Natural killer cell (primary cell): ENCODE measurements at regions of chr10 and their contacts with region 1.

Region 1: DNA sequence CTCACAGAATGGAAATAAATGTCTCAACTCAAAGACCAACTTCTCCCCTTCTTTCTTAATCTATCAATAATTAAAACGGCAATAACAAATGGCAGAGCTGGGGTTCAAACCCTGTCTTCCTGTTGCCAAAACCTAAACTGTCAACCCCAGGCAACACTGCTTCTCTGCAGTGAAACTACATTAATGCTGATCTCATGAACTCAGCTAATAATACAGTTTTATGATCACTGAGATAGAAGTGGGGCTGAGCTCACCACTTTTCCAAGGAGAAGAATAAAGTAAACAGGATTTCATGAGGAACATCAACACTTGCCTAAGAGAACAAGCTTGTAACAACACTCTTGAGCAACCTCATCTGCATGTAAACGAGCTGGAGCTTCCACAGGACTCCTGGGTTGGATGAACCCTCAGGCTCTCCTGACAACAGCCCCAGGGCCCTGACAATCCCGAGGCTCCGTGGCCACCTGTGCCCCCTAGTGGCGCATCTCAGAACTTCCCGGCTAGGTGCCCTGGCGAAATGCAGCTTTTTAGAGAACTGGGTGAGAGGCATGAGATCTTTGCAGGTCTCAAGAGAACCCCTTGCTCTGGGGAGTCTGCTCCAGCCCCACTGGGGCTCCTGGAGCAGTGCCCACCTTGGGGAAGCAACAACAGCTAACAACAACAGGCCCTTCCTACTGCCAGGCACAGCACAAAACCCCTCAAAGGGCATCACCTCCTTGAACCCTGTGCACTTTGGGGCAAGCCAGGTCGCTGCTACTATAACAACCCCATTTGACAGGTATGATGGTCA is 169.3 kb downstream of the SH3PXD2A start:
- DNase-seq: peak; percentile 64 to 87
- ATAC-seq: peak; percentile 77 to 92 (median 91)
- H3K4me3 ChIP-seq: no peak overlapping the region
- H3K4me3 Mint-ChIP-seq: no peak overlapping the region
- H3K27ac ChIP-seq: no peak overlapping the region
- H3K27ac Mint-ChIP-seq: no peak overlapping the region
- H3K4me1 ChIP-seq: no peaks in the 10 kb centered on the region
- H3K4me1 Mint-ChIP-seq: no peaks in the 10 kb centered on the region
- H3K27me3 ChIP-seq: no peaks in the 10 kb centered on the region
- H3K27me3 Mint-ChIP-seq: peaks cover 0 to 7% of the 10 kb centered on the region in 2 donors
- CTCF ChIP-seq: peak; percentile 95

Region 2: DNA sequence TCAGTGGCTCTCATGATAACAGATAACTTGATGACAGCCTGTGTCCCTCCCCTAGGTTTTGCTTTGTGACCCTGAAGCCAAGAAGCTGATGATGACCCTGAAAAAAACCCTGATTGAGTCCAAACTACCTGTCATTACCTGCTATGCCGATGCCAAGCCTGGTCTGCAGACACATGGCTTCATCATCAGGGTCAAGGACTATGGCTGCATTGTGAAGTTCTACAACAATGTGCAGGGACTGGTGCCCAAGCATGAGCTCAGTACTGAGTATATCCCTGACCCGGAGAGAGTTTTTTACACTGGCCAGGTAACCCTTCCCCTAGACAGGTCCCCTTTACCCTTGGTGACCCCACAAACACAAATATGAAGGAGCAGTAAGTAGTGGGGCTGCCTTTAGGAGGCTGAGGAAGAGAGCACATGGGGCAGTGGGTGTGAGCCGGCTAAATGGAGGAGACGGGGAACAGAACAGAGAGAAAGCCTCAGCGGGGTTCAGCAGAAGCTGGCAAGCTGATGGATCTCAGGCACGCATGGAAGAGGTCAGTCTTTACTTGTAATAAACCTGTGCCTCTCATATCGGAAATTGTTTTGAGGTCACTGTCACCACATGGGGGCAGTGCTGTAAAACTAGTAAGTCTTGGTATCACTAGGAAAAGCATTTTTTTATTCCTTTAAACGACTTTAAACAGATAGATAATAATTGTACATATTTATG is 269.5 kb before region 1 on chr10:
- intact Hi-C with region 1: loop called (anchors 5 kb)
- DNase-seq: peak; percentile 50 to 84
- ATAC-seq: peak; percentile 55 to 70 (median 65)
- H3K4me3 ChIP-seq: no peak overlapping the region
- H3K4me3 Mint-ChIP-seq: no peak overlapping the region
- H3K27ac ChIP-seq: no peak overlapping the region
- H3K27ac Mint-ChIP-seq: no peak overlapping the region
- H3K4me1 ChIP-seq: no peaks in the 10 kb centered on the region
- H3K4me1 Mint-ChIP-seq: no peaks in the 10 kb centered on the region
- H3K27me3 ChIP-seq: no peaks in the 10 kb centered on the region
- H3K27me3 Mint-ChIP-seq: no peaks in the 10 kb centered on the region
- CTCF ChIP-seq: peak; percentile 78

Region 3: DNA sequence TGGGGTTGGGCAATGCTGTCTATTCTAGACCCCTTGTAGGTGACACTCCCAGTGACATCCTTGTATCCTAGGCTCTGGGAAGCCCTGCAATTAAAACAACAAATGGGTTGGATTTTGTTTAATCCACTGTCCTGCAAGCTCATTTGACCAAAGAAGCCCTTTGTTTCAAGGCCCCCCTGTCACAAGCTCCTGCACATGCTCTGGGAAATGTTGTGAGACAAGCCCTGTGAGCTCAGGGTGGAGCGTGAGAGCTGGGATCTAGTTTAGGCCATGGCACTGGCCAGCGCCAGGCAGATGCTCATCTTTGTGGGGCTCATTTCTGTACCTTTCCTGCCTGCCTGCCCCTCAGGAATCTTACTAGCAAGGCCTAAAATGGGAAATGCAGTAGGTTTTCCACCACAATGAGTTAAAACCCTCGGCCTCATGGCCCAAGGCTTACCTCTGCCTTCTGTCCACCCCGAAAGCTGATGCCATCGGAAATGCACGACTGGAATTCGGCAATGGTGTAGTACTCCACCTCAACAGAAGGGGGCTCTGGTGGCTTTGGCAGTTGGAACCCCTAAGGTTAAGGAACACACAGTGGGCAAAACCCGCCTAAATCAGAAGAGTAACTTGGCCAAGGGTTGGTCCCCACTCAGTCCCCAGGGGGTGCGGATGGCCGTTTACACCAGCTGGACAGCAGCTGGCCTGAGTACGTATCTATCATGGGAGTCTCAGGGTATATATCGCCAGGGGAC is 80.5 kb before region 1 on chr10:
- intact Hi-C with region 1: loop called (anchors 1 kb)
- DNase-seq: peak in 1 of 2 donors; percentile 70
- ATAC-seq: peak; percentile 21 to 64 (median 46)
- H3K4me3 ChIP-seq: no peak overlapping the region
- H3K4me3 Mint-ChIP-seq: no peak overlapping the region
- H3K27ac ChIP-seq: no peak overlapping the region
- H3K27ac Mint-ChIP-seq: no peak overlapping the region
- H3K4me1 ChIP-seq: no peaks in the 10 kb centered on the region
- H3K4me1 Mint-ChIP-seq: no peaks in the 10 kb centered on the region
- H3K27me3 ChIP-seq: no peaks in the 10 kb centered on the region
- H3K27me3 Mint-ChIP-seq: no peaks in the 10 kb centered on the region
- CTCF ChIP-seq: peak; percentile 62

Region 4: GRCh38 chr10:103645141-103646054 is 40.7 kb before region 1 on chr10:
- intact Hi-C with region 1: no loop called
- DNase-seq: no peak
- ATAC-seq: peak in 1 of 3 donors; percentile 20
- H3K4me3 ChIP-seq: no peak overlapping the region
- H3K4me3 Mint-ChIP-seq: no peak overlapping the region
- H3K27ac ChIP-seq: no peak overlapping the region
- H3K27ac Mint-ChIP-seq: no peak overlapping the region
- H3K4me1 ChIP-seq: peaks cover 4% of the 10 kb centered on the region
- H3K4me1 Mint-ChIP-seq: no peaks in the 10 kb centered on the region
- H3K27me3 ChIP-seq: no peaks in the 10 kb centered on the region
- H3K27me3 Mint-ChIP-seq: no peaks in the 10 kb centered on the region
- CTCF ChIP-seq: no peak

Region 5: GRCh38 chr10:103759100-103759781 is 73.2 kb after region 1 on chr10:
- intact Hi-C with region 1: no loop called
- DNase-seq: peak in 1 of 2 donors; percentile 49
- ATAC-seq: no peak
- H3K4me3 ChIP-seq: no peak overlapping the region
- H3K4me3 Mint-ChIP-seq: no peak overlapping the region
- H3K27ac ChIP-seq: no peak overlapping the region
- H3K27ac Mint-ChIP-seq: no peak overlapping the region
- H3K4me1 ChIP-seq: peaks cover 22% of the 10 kb centered on the region
- H3K4me1 Mint-ChIP-seq: peaks cover 29 to 30% of the 10 kb centered on the region in 2 donors
- H3K27me3 ChIP-seq: no peaks in the 10 kb centered on the region
- H3K27me3 Mint-ChIP-seq: peaks cover 0 to 2% of the 10 kb centered on the region in 2 donors
- CTCF ChIP-seq: no peak